ENCODE measurements at regions of chr17 and their contacts with region 1.

Region 1: DNA sequence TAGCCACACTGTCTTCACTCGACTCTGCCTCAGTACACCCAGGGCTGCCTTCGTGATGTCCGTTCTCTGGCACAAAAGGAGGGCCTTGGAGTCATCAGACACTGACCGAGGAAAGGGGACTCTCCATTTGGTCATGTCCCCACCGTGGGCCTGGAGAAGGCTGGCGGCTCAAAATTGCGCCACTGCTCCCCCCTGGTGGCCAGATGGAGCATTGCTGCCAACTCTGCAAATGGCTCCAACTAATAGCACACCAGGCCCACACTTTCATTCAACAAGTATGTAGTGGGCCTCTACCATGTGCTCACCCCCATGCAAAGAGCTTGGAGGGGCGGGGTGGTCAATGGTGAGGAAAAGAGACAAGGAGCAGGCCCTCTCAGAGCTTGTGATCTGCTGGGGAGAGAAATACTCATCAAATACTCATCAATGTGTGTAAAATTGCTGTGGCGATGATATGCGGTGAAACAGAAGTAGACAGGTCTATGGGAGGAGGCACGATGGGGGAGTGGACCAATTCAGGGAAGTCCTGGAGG is 5.2 kb upstream of the GRIN2C start:
- DNase-seq: peak; percentile 82
- H3K4me3 ChIP-seq: no peak overlapping the region
- H3K27ac ChIP-seq: no peak overlapping the region
- H3K4me1 ChIP-seq: peaks cover 19% of the 10 kb centered on the region
- H3K27me3 ChIP-seq: peaks cover 14% of the 10 kb centered on the region
- CTCF ChIP-seq: peak; percentile 98

Region 2: DNA sequence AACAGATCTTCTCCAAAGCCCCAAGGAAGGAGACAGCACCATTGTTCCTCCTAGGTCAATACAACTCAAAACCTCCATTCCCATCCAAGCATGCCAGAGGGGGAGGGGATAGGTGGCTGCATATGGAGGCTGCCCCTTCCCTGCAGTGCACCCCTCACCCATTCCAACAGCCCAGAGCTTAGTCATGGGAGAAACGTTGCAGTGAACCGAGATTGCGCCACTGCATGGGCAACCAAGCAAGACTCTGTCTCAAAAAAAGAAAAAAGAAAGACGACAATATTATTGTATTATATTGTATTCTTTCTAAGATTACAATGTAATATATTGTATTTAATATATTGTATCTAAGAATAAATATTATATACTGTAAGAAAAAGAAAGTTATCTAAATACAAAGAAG is 205.0 kb before region 1 on chr17:
- CTCF ChIA-PET with region 1: interaction called, 7 read pairs
- POLR2A ChIA-PET with region 1: no interaction called
- intact Hi-C with region 1: loop called (anchors 2 kb)
- DNase-seq: no peak
- H3K4me3 ChIP-seq: no peak overlapping the region
- H3K27ac ChIP-seq: no peak overlapping the region
- H3K4me1 ChIP-seq: no peaks in the 10 kb centered on the region
- H3K27me3 ChIP-seq: peaks cover 59% of the 10 kb centered on the region
- CTCF ChIP-seq: no peak

Region 3: DNA sequence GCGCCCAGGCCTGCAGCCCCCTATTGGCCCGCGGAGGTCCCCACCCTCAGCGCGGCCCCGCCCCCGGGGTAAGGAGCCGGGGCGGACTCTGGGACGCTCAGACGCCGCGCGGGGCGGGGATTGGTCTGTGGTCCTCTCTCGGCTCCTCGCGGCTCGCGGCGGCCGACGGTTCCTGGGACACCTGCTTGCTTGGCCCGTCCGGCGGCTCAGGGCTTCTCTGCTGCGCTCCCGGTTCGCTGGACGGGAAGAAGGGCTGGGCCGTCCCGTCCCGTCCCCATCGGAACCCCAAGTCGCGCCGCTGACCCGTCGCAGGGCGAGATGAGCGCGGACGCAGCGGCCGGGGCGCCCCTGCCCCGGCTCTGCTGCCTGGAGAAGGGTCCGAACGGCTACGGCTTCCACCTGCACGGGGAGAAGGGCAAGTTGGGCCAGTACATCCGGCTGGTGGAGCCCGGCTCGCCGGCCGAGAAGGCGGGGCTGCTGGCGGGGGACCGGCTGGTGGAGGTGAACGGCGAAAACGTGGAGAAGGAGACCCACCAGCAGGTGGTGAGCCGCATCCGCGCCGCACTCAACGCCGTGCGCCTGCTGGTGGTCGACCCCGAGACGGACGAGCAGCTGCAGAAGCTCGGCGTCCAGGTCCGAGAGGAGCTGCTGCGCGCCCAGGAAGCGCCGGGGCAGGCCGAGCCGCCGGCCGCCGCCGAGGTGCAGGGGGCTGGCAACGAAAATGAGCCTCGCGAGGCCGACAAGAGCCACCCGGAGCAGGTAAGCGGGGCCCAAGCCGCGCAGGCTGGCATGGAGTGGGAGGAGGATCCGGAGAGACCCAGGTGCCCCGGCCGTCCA is 116.2 kb before region 1 on chr17 and contains the start of gene NHERF1:
- CTCF ChIA-PET with region 1: interaction called, 15 read pairs
- POLR2A ChIA-PET with region 1: no interaction called
- intact Hi-C with region 1: loop called (anchors 1 kb)
- DNase-seq: peak; percentile 95
- H3K4me3 ChIP-seq: peak within 1 kb of the TSS; percentile 80
- H3K27ac ChIP-seq: peak within 1 kb of the TSS; percentile 52
- H3K4me1 ChIP-seq: peaks cover 11% of the 10 kb centered on the region
- H3K27me3 ChIP-seq: no peaks in the 10 kb centered on the region
- CTCF ChIP-seq: no peak; the same call in 1 of the 2 replicates
- total RNA-seq, gene NHERF1: 33.8 and 47.9 TPM in 2 replicates

Region 4: DNA sequence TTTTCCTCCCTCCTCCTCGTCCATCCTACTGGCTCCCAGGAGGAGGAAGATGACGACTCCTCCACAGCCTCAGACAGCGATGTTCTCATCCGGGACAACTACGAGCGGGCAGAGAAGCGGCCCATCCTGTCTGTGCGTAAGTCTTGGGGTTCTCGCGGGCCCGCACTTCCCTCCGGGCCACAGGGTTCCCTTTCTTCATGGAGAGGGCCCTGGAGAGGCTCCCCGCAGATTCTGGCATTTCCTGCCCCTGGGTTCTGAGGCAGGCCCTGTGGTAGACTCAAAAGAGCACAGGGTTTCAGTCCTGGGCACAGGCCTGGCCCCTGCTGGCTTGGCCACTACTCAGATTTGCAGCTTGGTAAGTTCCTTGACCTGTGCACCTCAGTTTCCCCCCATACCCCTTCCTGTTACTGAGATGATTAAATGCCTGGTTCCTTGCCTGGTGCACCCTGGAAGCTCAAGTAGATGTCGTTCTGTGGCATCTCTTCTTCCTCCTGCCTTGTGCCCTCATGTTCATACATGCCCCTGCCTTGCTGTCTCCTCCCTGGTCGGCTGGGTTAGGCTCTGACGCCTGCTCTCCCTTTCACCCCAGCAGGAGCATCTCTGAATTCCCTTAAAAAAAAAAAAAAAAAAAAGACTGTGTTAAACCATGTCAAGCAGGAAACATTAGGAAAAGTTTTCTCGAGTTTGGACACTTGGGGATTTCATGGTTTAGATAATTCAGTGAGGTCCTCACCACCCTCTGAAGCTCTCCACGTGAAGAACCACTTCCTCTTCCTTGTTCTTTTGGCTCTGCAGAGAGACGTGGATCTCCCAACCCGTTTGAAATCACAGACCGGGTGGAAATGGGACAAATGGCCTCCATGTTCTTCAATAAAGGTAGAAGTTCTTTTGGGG is 74.5 kb before region 1 on chr17:
- CTCF ChIA-PET with region 1: interaction called, 5 read pairs
- POLR2A ChIA-PET with region 1: no interaction called
- intact Hi-C with region 1: loop called (anchors 1 kb)
- DNase-seq: peak; percentile 30
- H3K4me3 ChIP-seq: no peak overlapping the region
- H3K27ac ChIP-seq: no peak overlapping the region
- H3K4me1 ChIP-seq: no peaks in the 10 kb centered on the region
- H3K27me3 ChIP-seq: no peaks in the 10 kb centered on the region
- CTCF ChIP-seq: no peak

Region 5: DNA sequence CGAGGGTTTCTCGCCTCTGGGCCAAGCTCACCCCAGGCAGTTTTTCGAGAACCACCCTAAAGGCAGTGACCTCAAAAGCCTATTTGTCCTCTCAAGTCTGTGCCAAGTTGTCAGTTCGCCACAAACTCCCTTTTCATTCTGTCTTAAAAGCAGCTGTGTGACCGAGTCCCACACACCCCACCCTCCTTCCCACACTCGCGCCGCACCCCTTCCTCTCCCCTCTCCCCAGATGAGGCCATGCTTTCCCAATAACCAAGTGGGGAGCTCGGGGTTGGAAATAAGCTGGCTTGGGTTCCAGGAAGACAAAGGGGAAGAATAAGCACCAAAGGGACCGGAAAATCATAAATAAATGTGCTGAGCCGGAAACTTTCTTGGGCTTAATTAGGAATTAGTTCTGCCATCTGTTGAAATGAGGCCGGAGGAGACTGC is 42.0 kb before region 1 on chr17:
- CTCF ChIA-PET with region 1: interaction called, 5 read pairs
- POLR2A ChIA-PET with region 1: no interaction called
- intact Hi-C with region 1: loop called (anchors 5 kb)
- DNase-seq: peak; percentile 93
- H3K4me3 ChIP-seq: no peak overlapping the region
- H3K27ac ChIP-seq: peak overlapping the region; percentile 94
- H3K4me1 ChIP-seq: peaks cover 65% of the 10 kb centered on the region
- H3K27me3 ChIP-seq: no peaks in the 10 kb centered on the region
- CTCF ChIP-seq: no peak

Measured in A673 (cell line).